ENCODE measurements at regions of chr16 and their contacts with region 1.

Region 1: GRCh38 chr16:66511615-66512500 is 38.1 kb downstream of the TK2 start:
- DNase-seq: peak in 2 of 3 donors; percentile 58 to 60
- H3K4me3 ChIP-seq: no peak overlapping the region
- H3K27ac ChIP-seq: no peak overlapping the region
- H3K4me1 ChIP-seq: peaks cover 5 to 41% (median 27%) of the 10 kb centered on the region in 4 experiments
- H3K27me3 ChIP-seq: no peaks in the 10 kb centered on the region

Region 2: GRCh38 chr16:66483689-66484481 is 28.0 kb before region 1 on chr16:
- CTCF ChIA-PET with region 1: interaction called, 12 read pairs
- POLR2A ChIA-PET with region 1: no interaction called
- DNase-seq: peak; percentile 69 to 82 (median 79)
- H3K4me3 ChIP-seq: no peak overlapping the region
- H3K27ac ChIP-seq: no peak overlapping the region
- H3K4me1 ChIP-seq: peaks cover 3 to 21% (median 14%) of the 10 kb centered on the region in 4 experiments
- H3K27me3 ChIP-seq: no peaks in the 10 kb centered on the region

Region 3: DNA sequence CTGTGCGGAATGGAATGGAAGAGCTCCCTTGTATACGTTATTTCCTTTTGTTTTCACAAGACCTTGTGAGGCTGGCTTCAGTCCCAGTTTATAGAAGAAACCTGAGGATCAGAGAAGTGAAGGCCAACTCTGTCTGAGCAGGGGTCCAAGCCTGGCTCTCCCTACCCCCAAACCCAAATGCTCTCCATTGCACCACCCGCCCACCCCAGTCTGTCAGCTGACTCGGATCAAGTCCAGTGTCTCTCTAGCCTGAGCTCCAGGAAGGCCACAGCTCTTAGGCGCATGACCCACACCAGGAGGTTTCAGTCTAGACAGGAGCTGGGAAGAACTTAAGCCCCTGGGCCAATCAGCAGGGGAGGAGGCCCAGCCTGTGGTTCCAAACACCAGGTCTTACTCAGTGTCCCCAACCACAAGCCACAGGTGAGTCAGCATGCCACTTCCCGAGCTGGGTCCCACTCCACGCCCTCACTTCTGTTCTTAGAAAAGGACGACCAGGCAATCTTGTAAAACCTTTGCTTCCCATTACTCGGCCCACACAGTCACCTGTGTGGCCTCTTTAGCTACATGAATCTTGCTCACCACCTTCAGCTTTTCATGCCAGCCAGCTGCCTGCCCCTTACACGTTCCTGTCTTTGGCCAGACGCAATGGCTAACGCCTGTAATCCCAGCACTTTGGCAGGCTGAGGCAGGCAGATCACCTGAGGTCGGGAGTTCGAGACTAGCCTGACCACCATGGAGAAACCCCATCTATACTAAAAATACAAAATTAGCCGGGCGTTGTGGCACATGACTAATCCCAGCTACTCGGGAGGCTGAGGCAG is 10.3 kb after region 1 on chr16:
- CTCF ChIA-PET with region 1: interaction called, 85 read pairs
- POLR2A ChIA-PET with region 1: interaction called, 10 read pairs
- DNase-seq: peak; percentile 87 to 96 (median 94)
- H3K4me3 ChIP-seq: peak overlapping the region in 4 of 7 experiments; percentile 2 to 41 (median 31)
- H3K27ac ChIP-seq: peak overlapping the region in 1 of 2 experiments; percentile 68
- H3K4me1 ChIP-seq: peaks cover 50 to 96% (median 93%) of the 10 kb centered on the region in 4 experiments
- H3K27me3 ChIP-seq: no peaks in the 10 kb centered on the region

Region 4: DNA sequence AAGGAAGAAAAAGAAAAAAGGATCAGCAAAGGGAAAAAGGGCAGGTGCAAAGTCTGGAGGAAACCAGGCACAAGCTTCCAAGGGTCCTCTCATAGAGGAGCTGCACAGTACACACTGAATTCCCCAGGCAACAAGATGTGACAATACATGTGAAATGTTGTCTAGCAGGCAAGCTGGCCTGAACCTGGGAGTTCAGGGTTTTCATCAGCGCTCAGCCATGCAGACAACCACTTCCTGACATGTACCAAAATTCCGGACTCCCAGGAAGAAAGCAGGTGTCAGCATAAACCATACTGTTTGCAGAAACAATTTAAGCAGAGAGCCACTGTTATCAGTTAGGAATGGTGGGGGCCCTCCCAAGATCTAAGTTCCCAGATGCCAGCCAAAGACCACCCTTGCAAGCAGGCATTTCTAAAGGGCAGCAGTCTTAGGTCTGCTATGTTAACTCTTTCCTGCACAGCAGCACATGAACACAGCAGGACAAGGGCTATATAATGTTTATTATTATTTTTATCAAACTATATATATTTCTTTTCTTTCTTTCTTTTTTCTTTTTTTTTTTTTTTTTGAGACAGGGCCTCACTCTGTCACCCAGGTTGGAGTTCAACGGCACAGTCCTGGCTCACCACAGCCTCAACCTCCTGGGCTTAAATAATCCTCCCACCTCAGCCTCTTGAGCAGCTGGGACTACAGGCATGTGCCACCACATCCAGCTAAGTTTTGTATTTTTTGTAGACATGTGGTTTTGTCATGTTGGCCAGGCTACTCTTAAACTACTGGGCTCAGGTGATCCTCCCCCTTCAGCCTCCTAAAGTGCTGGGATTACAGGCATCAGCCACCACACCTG is 28.0 kb after region 1 on chr16:
- CTCF ChIA-PET with region 1: interaction called, 168 read pairs
- POLR2A ChIA-PET with region 1: no interaction called
- DNase-seq: no peak
- H3K4me3 ChIP-seq: peak overlapping the region in 1 of 7 experiments; percentile 11
- H3K27ac ChIP-seq: no peak overlapping the region
- H3K4me1 ChIP-seq: peaks cover 5 to 20% (median 19%) of the 10 kb centered on the region in 4 experiments
- H3K27me3 ChIP-seq: no peaks in the 10 kb centered on the region

Region 5: GRCh38 chr16:66562407-66562806 is 50.5 kb after region 1 on chr16:
- CTCF ChIA-PET with region 1: interaction called, 18 read pairs
- POLR2A ChIA-PET with region 1: no interaction called
- DNase-seq: no peak
- H3K4me3 ChIP-seq: no peak overlapping the region
- H3K27ac ChIP-seq: no peak overlapping the region
- H3K4me1 ChIP-seq: peaks cover 24 to 44% (median 38%) of the 10 kb centered on the region in 4 experiments
- H3K27me3 ChIP-seq: no peaks in the 10 kb centered on the region

Region 6: GRCh38 chr16:66580605-66581209 is 68.8 kb after region 1 on chr16:
- CTCF ChIA-PET with region 1: interaction called, 41 read pairs
- POLR2A ChIA-PET with region 1: no interaction called
- DNase-seq: no peak
- H3K4me3 ChIP-seq: no peak overlapping the region
- H3K27ac ChIP-seq: no peak overlapping the region
- H3K4me1 ChIP-seq: peaks cover 8 to 36% (median 29%) of the 10 kb centered on the region in 4 experiments
- H3K27me3 ChIP-seq: peaks cover 0 to 1% (median 0%) of the 10 kb centered on the region in 5 experiments

Measured in common myeloid progenitor, CD34-positive (primary cell).